Sigmoid colon (tissue), 7 donors: ENCODE measurements at regions of chr9 and their contacts with region 1.

Region 1: GRCh38 chr9:133327834-133328484 is 8.0 kb downstream of the SURF6 start:
- DNase-seq: peak; percentile 50
- H3K4me3 ChIP-seq: no peak overlapping the region
- H3K27ac ChIP-seq: no peak overlapping the region
- H3K4me1 ChIP-seq: no peaks in the 10 kb centered on the region
- H3K27me3 ChIP-seq: no peaks in the 10 kb centered on the region
- CTCF ChIP-seq: no peak
- EP300 ChIP-seq: no peak
- POLR2A ChIP-seq: no peak

Region 2: DNA sequence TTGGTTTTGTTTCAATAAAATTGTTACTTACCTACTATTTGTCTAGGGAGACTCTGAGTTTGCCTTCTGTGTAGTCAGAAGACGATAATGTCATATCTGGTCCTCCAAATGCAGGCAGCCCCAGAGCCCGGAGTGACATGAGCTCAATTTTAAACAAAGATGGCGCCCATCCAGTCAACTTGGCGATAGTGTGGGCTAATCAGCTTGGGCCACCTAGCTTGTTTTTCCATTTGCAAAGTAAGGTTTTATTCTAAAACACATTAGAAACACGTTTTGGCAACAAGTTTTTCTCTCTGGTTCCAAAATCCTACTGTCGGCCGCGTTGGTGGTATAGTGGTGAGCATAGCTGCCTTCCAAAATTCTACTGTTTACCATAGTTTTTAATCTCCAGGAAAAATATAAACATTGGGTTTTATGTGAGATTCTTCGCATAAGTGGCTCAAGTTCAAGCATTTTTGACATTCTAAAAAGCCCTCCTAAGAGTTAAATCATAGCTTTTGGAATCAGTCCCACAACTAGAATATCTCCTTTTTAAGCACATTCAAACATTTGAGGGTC is 396.7 kb before region 1 on chr9:
- intact Hi-C with region 1: no loop called
- DNase-seq: no peak
- H3K4me3 ChIP-seq: no peak overlapping the region
- H3K27ac ChIP-seq: no peak overlapping the region
- H3K4me1 ChIP-seq: peaks cover 0 to 9% (median 6%) of the 10 kb centered on the region in 4 donors
- H3K27me3 ChIP-seq: no peaks in the 10 kb centered on the region
- CTCF ChIP-seq: no peak
- EP300 ChIP-seq: no peak
- POLR2A ChIP-seq: no peak

Region 3: GRCh38 chr9:133184962-133185361 is 143.0 kb before region 1 on chr9:
- intact Hi-C with region 1: loop called (anchors 5 kb)
- DNase-seq: peak; percentile 69
- H3K4me3 ChIP-seq: no peak overlapping the region
- H3K27ac ChIP-seq: no peak overlapping the region
- H3K4me1 ChIP-seq: peaks cover 0 to 5% (median 2%) of the 10 kb centered on the region in 4 donors
- H3K27me3 ChIP-seq: peaks cover 0 to 26% (median 0%) of the 10 kb centered on the region in 3 donors
- CTCF ChIP-seq: peak in 3 of 4 experiments; percentile 44 to 56 (median 46)
- EP300 ChIP-seq: no peak
- POLR2A ChIP-seq: no peak